Endothelial cell of umbilical vein (primary cell): ENCODE measurements at regions of chr2 and their contacts with region 1.

Region 1: DNA sequence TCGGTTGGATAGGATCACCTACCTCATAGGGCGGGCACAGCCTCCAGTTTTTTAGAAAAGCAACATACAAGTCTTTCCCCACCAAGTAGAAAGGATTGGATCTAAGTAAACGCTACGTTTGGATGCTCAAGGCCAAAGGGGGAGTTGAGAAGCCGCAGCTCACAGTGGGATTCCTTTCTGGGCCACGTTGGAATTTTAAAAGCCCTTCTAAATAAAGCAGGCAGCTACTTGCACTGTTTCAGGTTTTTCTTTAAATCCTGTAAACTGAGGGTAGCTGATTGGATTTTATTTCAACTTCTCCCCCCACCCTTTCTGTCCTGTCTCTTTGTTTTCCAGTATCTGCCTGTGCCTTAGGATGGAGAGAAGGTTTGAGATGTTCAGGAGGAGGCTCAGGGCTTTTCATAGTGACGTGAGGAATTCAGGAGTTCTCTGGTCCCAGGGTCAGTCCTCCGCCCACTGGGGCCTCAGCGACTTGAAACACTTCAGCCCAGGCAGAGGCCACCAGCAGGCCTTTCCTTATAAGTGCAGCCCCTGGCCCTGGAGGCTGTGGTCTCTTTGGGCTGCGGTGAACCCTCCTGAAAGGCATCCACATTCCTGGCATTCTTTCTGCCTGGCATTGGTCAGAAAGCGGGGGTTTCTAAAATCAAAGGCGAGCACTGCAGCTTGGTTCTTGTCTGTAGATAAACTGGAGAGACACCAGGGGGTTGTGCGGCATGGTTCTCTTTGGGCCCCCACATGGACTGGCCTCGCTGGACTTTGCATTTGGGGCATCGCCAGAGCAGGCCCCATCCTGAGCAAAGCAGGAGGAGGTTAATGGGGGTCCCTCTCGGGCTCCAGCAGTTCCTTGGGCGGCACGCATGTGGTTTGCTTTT is 44.5 kb downstream of the SH3BP4 start:
- DNase-seq: peak; percentile 64
- H3K4me3 ChIP-seq: no peak overlapping the region
- H3K27ac ChIP-seq: peak overlapping the region; percentile 88
- H3K4me1 ChIP-seq: peaks cover 56% of the 10 kb centered on the region
- H3K27me3 ChIP-seq: no peaks in the 10 kb centered on the region
- CTCF ChIP-seq: peak; percentile 41 to 53
- POLR2A ChIP-seq: no peak

Region 2: DNA sequence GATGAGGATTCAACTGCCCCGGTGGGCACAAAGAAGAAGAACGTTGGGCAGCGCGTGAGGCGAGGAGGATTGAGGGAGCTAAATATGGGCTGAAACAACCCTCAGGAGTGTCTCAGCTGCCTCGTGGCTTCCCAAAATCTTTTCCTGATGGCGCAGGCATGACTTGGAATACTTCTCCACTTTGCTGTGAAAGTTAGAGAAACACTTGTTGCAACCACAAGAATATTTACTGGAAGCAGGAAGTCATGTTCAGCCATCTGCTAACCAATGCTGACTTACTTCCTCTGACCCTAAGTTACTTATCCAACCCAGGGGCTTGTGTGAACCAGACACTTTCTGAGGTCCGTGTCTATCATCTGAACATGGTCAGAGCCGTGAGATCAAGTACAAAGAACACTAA is 648.2 kb before region 1 on chr2:
- CTCF ChIA-PET with region 1: no interaction called
- POLR2A ChIA-PET with region 1: no interaction called
- dilution Hi-C with region 1: no loop called
- intact Hi-C with region 1: no loop called
- DNase-seq: no peak
- H3K4me3 ChIP-seq: no peak overlapping the region
- H3K27ac ChIP-seq: no peak overlapping the region
- H3K4me1 ChIP-seq: no peaks in the 10 kb centered on the region
- H3K27me3 ChIP-seq: no peaks in the 10 kb centered on the region
- CTCF ChIP-seq: no peak
- POLR2A ChIP-seq: no peak

Region 3: GRCh38 chr2:235026649-235027557 is 30.6 kb after region 1 on chr2:
- CTCF ChIA-PET with region 1: interaction called, 4 read pairs
- POLR2A ChIA-PET with region 1: no interaction called
- dilution Hi-C with region 1: no loop called
- intact Hi-C with region 1: loop called (anchors 1 kb)
- DNase-seq: peak; percentile 21
- H3K4me3 ChIP-seq: no peak overlapping the region
- H3K27ac ChIP-seq: peak overlapping the region; percentile 76
- H3K4me1 ChIP-seq: peaks cover 60% of the 10 kb centered on the region
- H3K27me3 ChIP-seq: no peaks in the 10 kb centered on the region
- CTCF ChIP-seq: no peak
- POLR2A ChIP-seq: no peak